BJ (cell line): ENCODE measurements at regions of chr11 and their contacts with region 1.

Region 1: DNA sequence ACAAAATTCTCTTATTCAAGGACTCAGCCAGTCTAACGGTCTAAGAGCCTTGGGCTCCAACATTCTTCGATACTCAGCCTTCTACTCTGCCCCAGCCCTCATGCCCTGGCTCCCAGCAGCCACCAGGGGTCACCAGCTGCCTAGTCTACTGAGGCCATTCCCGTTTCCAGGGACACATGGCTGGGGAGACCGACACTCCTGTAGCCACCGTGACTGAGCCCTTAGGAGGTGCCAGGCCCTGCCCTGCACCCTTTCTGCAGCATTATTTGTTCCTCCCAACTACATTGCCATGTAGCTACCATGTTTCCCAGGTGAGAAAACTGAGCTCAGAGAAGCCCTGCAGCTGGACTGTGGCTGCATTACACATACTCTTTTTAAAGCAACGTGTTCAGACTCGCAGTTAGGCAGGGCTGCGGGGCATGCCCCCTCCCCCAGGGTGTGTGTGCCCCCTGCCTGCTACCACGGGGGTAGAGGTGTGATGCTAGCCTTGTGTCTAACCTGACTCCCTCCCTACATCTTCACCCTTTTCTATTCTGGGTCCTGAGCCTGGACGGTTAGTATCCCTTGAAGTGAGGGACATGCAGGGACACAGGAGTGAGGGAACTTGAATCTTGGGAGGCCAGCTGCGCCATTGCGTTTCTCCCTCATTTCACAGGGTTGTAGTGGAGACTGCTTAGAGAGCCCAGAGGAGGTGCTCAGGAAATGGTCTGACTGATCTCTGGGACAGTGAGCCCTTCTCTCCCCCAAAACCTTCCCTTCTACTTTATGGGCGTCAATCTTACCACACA is 17.5 kb downstream of the ATG16L2 start:
- DNase-seq: no peak
- H3K4me3 ChIP-seq: no peak overlapping the region
- H3K27me3 ChIP-seq: no peaks in the 10 kb centered on the region
- CTCF ChIP-seq: peak; percentile 97

Region 2: DNA sequence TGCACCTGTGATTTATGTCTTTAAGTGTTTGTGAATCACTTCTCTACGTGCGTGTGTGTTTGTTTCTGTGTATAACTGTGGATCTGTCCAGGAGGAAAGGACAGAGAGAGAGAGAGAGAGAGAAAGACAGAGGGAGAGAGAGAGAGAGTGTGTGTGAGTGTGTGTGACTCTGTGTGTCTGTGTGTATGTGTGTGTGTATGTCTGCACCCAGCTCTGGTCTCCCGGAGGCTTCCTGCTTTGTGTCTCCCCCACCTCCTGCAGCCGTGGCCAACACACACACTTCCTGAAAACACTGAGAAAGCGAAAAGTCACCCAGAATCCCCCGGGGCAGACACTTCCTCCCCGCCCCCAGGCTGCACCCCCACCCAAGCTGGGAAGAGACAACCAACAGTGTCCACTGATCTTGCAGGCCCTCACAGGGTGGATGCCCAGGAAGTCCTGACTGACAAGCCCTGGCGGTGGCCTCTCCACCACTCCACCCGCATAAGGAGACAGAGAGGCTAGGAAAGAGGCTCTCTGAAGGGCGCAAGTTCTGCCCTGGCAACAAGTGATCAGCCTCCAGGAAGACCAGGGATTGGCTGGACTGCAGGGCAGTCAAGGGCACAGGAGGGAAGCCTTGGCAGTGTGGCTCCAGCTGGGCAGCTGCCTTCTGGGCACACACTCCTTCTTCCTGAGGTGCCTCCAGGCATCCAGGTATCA is 109.5 kb before region 1 on chr11:
- CTCF ChIA-PET with region 1: interaction called, 10 read pairs
- POLR2A ChIA-PET with region 1: no interaction called
- DNase-seq: peak; percentile 46
- H3K4me3 ChIP-seq: peak overlapping the region; percentile 50
- H3K27me3 ChIP-seq: no peaks in the 10 kb centered on the region
- CTCF ChIP-seq: no peak

Region 3: GRCh38 chr11:72814286-72815109 is 17.2 kb before region 1 on chr11 and contains the start of gene ATG16L2:
- CTCF ChIA-PET with region 1: interaction called, 12 read pairs
- POLR2A ChIA-PET with region 1: no interaction called
- DNase-seq: no peak
- H3K4me3 ChIP-seq: peak within 1 kb of the TSS; percentile 68
- H3K27me3 ChIP-seq: no peaks in the 10 kb centered on the region
- CTCF ChIP-seq: peak; percentile 31
- polyA plus RNA-seq, gene ATG16L2: 8.3 and 10.1 TPM in 2 replicates

Region 4: DNA sequence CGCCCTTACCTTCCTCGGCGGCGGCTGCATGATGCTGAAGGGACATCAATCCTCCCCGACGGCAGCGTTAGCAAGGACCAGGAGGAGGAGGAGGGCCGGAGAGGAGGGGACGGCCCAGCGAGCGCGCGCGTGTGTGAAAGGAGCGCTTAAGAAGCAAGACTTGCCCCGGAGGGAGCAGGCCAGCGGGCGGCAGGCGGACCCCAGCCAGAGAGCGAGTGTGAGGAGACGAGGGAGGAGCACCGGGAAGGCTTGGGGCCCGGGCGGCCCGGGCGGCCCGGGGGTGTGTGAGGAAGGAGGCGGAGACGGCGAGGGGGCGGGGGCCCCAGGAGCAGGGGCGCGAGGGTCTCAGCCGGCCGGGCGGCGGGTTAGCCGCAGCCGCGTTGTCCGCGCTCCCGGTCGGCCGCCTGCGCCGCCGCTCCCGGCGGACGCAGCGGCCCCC is 310.2 kb after region 1 on chr11:
- CTCF ChIA-PET with region 1: interaction called, 19 read pairs
- POLR2A ChIA-PET with region 1: no interaction called
- DNase-seq: no peak
- H3K4me3 ChIP-seq: peak overlapping the region; percentile 95
- H3K27me3 ChIP-seq: no peaks in the 10 kb centered on the region
- CTCF ChIP-seq: 0 out of 2 replicates have a peak, but pooled peaks have one; percentile 7

Region 5: GRCh38 chr11:73177778-73178577 is 346.3 kb after region 1 on chr11:
- CTCF ChIA-PET with region 1: interaction called, 183 read pairs
- POLR2A ChIA-PET with region 1: no interaction called
- DNase-seq: no peak
- H3K4me3 ChIP-seq: no peak overlapping the region
- H3K27me3 ChIP-seq: no peaks in the 10 kb centered on the region; the same call in 1 of the 2 replicates
- CTCF ChIP-seq: peak; percentile 81

Region 6: GRCh38 chr11:73242251-73243079 is 410.8 kb after region 1 on chr11:
- CTCF ChIA-PET with region 1: interaction called, 14 read pairs
- POLR2A ChIA-PET with region 1: no interaction called
- DNase-seq: no peak
- H3K4me3 ChIP-seq: no peak overlapping the region
- H3K27me3 ChIP-seq: no peaks in the 10 kb centered on the region
- CTCF ChIP-seq: peak; percentile 98